Right ventricle myocardium superior (tissue), 1 donor: ENCODE measurements at regions of chr12 and their contacts with region 1.

Region 1: GRCh38 chr12:33994857-33995808 is 27.2 kb upstream of the ALG10 start:
- DNase-seq: no peak
- ATAC-seq: no peak

Region 2: DNA sequence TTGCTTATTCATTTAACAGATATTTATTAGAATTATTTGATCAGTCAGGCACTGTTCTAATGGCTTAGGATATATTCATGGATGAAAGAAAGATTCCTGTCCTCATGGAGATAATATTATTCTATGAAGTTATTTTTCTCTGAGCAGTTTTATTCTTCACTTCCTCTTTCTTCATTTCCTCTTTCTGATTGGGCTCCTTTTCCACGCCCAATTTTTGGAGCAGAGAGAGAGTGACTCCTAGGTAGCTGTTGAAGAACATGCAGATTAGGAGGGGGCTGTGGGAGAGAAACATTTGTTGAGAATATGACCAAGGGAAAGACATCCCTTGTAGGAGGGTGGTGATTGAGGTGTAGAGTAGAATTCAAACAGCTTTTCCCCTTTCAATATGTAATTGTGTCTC is 1233.4 kb before region 1 on chr12:
- intact Hi-C with region 1: loop called (anchors 10 kb)
- DNase-seq: no peak
- ATAC-seq: no peak